Posterior cingulate gyrus (tissue), 11 donors: ENCODE measurements at regions of chr11 and their contacts with region 1.

Region 1: GRCh38 chr11:45178890-45179671 is 32.6 kb downstream of the PRDM11 start:
- DNase-seq: peak in 2 of 10 donors; percentile 43 to 90

Region 2: DNA sequence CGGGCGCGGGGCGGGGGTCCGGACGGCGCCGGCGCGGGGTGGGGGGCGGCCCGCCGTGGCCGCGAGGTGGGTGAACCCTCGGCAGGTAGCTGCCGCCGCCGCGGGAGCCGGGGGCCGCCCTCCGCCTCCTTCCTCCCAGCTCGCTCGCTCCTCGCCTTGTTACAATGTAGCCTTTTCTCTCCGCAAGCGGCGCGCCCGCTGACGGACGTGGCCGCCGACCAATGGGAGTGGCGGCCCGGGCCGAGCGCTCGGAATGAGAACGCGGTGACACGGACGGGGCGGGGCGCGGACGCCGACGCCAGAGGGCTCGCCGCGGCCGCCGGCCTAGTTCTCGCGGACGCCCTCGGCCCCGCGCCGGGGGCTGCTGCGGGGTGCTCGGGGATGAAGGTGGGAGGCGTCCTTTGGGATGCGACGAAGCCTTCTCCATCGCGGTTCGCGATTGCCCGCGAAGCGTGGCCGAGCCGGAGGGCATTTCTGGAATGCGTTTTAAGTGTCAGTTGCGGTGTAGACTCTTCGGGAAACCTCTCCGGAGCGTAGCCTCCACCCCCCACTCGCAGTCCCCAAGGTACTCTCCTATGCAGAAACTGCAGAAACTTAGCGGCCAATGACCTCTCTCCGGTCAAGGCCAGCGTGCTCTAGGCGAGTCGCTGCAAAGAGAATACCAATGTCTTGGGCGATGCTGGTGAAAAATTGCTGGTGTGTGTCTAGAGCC is 31.9 kb before region 1 on chr11:
- intact Hi-C with region 1: loop called (anchors 2 kb)
- DNase-seq: peak; percentile 87 to 99 (median 94)

Region 3: DNA sequence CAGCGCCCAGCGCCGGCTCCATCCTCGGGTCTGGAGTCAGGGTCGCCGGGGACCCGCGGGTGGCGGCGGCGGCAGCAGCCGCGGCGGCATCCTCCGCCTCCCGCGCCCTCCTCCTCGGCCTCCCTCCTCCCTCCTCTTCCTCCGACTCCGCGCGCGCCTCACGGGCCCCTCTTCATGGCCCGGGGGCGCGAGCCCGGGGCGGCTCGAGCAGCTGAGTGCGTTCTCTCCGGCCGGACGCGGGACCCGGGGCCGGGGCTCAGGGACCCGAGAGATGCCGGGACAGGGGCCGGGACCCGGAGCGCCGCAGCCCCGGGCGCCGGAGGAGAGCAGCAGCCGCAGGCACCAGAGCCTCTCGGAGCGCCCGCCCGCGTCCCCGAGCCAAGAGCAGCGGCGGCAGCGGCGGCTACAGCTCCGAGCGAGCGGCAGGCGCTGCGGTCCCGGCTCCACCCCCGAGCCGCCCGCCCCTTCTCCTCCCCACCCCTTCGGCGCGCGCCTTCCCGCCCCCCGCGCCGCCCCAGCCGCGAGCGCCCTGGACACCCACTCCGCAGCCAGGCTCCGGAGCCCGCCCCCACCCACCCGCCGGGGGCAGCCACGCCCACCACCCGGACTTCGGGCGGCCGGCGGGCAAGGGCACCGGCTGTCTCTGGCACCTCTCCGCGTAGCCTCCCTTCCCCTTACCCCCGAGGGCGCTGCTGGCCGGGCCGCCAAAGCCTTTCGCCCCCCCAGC is 486.3 kb after region 1 on chr11 and contains the start of gene CHST1:
- intact Hi-C with region 1: no loop called
- DNase-seq: peak in 9 of 10 donors; percentile 24 to 94 (median 63)